Common myeloid progenitor, CD34-positive (primary cell): ENCODE measurements at regions of chr10 and their contacts with region 1.

Region 1: DNA sequence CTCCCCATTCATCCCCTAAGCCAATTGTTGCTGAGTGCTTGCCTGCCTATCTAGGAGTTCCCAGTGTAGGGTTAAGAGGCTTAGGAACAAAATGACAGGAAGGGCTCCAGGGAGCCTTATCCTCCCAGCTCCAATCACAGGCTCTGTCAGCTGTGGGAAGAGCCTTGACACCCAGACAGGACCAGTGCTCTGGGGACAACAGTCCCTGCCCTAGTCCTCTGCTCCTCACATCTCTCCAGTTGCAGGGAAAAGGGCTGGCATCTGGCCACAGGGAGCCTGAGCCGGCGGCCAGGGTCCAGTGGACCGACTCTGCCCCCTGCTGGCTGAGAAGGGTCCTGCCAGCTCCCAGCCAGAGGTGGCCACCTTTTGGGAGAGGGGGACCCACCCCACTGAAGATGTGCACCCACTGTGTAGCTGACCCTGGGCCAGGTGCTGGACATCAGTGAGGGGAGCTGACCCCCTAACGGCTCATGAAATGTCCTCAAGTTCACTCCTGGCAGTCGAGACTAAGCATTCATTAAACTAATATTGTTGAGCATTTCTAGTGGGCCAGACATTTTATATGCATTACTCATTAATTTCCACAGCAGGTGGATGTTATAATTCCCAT is 17.6 kb downstream of the DNAJB12 start:
- DNase-seq: peak in 1 of 3 donors; percentile 31
- H3K4me3 ChIP-seq: no peak overlapping the region
- H3K27ac ChIP-seq: no peak overlapping the region
- H3K4me1 ChIP-seq: peaks cover 6 to 65% (median 51%) of the 10 kb centered on the region in 4 experiments
- H3K27me3 ChIP-seq: no peaks in the 10 kb centered on the region

Region 2: GRCh38 chr10:71945819-71946474 is 391.2 kb before region 1 on chr10:
- CTCF ChIA-PET with region 1: no interaction called
- POLR2A ChIA-PET with region 1: no interaction called
- DNase-seq: peak; percentile 35 to 61 (median 56)
- H3K4me3 ChIP-seq: no peak overlapping the region
- H3K27ac ChIP-seq: no peak overlapping the region
- H3K4me1 ChIP-seq: no peaks in the 10 kb centered on the region
- H3K27me3 ChIP-seq: peaks cover 0 to 2% (median 0%) of the 10 kb centered on the region in 5 experiments

Region 3: DNA sequence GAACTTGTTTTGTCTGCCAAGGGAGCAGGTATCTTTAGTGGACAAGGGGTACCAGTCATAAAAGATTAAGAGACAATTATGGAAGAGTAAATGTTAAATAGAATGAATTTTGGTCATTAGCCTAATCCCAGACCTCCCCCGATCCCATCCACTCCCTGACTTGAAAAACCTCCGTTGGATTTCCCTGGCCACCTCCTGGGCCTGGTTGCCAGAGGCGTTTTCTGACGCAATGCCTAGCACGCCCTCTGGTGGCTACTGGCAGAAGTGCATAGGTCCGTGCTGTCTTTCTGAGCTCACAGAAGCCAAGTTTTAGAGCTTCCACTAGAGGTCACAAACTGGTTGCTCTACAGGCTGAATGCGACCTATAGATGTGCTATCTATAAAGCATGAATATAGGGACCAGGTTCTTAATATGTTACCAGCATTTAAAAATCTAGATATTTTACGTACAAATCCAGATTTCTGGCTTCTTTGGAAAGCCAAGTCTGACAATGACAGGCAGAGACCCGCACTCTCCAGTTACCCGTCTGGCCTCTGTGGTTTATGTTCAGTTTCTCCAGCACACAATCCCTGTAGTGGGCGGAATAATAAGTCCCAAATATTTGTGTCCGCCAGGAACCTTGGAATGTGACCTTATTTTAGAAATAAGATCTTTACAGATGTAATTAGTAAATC is 288.5 kb before region 1 on chr10:
- CTCF ChIA-PET with region 1: interaction called, 11 read pairs
- POLR2A ChIA-PET with region 1: interaction called, 8 read pairs
- DNase-seq: peak; percentile 88 to 93 (median 90)
- H3K4me3 ChIP-seq: no peak overlapping the region
- H3K27ac ChIP-seq: no peak overlapping the region
- H3K4me1 ChIP-seq: no peaks in the 10 kb centered on the region
- H3K27me3 ChIP-seq: no peaks in the 10 kb centered on the region

Region 4: GRCh38 chr10:72126184-72126871 is 210.8 kb before region 1 on chr10:
- CTCF ChIA-PET with region 1: interaction called, 44 read pairs
- POLR2A ChIA-PET with region 1: no interaction called
- DNase-seq: peak; percentile 55 to 65 (median 59)
- H3K4me3 ChIP-seq: no peak overlapping the region
- H3K27ac ChIP-seq: no peak overlapping the region
- H3K4me1 ChIP-seq: no peaks in the 10 kb centered on the region
- H3K27me3 ChIP-seq: no peaks in the 10 kb centered on the region

Region 5: DNA sequence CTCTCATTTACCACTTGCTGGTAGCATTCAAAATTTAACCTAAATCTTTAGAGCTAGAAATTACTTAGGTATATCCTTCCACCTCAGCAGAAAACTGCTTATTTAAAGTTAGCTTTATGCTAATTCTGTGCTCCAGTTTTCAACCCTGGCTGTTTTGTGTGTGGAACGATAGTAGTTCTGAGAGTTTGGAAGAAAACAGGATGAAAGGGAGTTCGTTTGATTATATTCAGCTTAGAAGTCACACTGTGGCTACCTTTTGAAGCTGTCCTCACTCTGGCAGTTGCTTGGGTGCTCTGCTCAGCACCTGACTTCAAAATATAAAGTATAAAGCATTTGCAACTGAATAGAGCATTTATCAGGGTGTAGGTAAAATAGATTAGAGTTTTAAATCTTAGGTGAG is 118.4 kb before region 1 on chr10:
- CTCF ChIA-PET with region 1: interaction called, 10 read pairs
- POLR2A ChIA-PET with region 1: interaction called, 4 read pairs
- DNase-seq: no peak
- H3K4me3 ChIP-seq: no peak overlapping the region
- H3K27ac ChIP-seq: peak overlapping the region in 1 of 2 experiments; percentile 32
- H3K4me1 ChIP-seq: peaks cover 17 to 40% (median 26%) of the 10 kb centered on the region in 4 experiments
- H3K27me3 ChIP-seq: no peaks in the 10 kb centered on the region

Region 6: GRCh38 chr10:72229261-72230251 is 107.6 kb before region 1 on chr10:
- CTCF ChIA-PET with region 1: interaction called, 11 read pairs
- POLR2A ChIA-PET with region 1: no interaction called
- DNase-seq: no peak
- H3K4me3 ChIP-seq: no peak overlapping the region
- H3K27ac ChIP-seq: peak overlapping the region in 1 of 2 experiments; percentile 0
- H3K4me1 ChIP-seq: peaks cover 0 to 2% (median 1%) of the 10 kb centered on the region in 4 experiments
- H3K27me3 ChIP-seq: no peaks in the 10 kb centered on the region

Region 7: GRCh38 chr10:72254813-72255568 is 82.1 kb before region 1 on chr10:
- CTCF ChIA-PET with region 1: interaction called, 20 read pairs
- POLR2A ChIA-PET with region 1: interaction called, 4 read pairs
- DNase-seq: peak; percentile 55 to 75 (median 72)
- H3K4me3 ChIP-seq: peak overlapping the region in 5 of 7 experiments; percentile 6 to 62 (median 41)
- H3K27ac ChIP-seq: peak overlapping the region in 1 of 2 experiments; percentile 43
- H3K4me1 ChIP-seq: peaks cover 26 to 50% (median 37%) of the 10 kb centered on the region in 4 experiments
- H3K27me3 ChIP-seq: no peaks in the 10 kb centered on the region

Region 8: GRCh38 chr10:72354478-72355213 is 17.5 kb after region 1 on chr10 and contains the start of gene DNAJB12:
- CTCF ChIA-PET with region 1: interaction called, 24 read pairs
- POLR2A ChIA-PET with region 1: interaction called, 4 read pairs
- DNase-seq: peak; percentile 95 to 97 (median 97)
- H3K4me3 ChIP-seq: peak within 1 kb of the TSS; percentile 71 to 100 (median 93)
- H3K27ac ChIP-seq: peak within 1 kb of the TSS; percentile 95 to 97
- H3K4me1 ChIP-seq: peaks cover 4 to 17% (median 11%) of the 10 kb centered on the region in 4 experiments
- H3K27me3 ChIP-seq: no peaks in the 10 kb centered on the region